ENCODE measurements at regions of chr3 and their contacts with region 1.

Region 1: GRCh38 chr3:106609666-106610301 is 741.0 kb upstream of the CBLB start:
- DNase-seq: peak; percentile 73
- ATAC-seq: peak; percentile 79
- H3K4me3 Mint-ChIP-seq: no peak overlapping the region
- H3K27ac Mint-ChIP-seq: peak overlapping the region; percentile 0
- H3K4me1 Mint-ChIP-seq: peaks cover 21% of the 10 kb centered on the region
- H3K27me3 Mint-ChIP-seq: peaks cover 2% of the 10 kb centered on the region
- CTCF ChIP-seq: peak; percentile 86

Region 2: GRCh38 chr3:105686278-105686897 is 923.4 kb before region 1 on chr3:
- CTCF ChIA-PET with region 1: interaction called, 3 read pairs
- POLR2A ChIA-PET with region 1: no interaction called
- intact Hi-C with region 1: loop called (anchors 10 kb)
- DNase-seq: no peak
- ATAC-seq: peak; percentile 66
- H3K4me3 Mint-ChIP-seq: no peak overlapping the region
- H3K27ac Mint-ChIP-seq: peak overlapping the region; percentile 67
- H3K4me1 Mint-ChIP-seq: peaks cover 26% of the 10 kb centered on the region
- H3K27me3 Mint-ChIP-seq: no peaks in the 10 kb centered on the region
- CTCF ChIP-seq: peak; percentile 89

Region 3: DNA sequence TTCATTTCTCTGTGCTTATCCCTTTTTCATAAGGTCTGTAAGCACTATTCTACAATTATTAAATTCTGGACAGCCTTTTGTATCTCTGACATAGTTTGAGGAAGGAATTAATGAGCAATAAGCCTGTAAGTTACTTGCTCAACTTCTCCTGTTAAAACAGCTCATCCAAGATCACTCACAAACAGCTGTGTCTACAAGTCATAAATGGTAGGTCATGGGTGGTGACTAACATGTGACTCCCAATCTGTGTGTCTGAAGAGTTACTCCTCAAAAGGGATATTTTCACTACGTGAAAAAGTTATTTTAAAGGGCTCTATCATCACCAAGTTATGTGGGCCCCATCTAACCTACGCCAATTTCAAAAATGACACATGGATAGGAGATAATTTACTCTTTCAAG is 595.8 kb before region 1 on chr3:
- CTCF ChIA-PET with region 1: no interaction called
- POLR2A ChIA-PET with region 1: no interaction called
- intact Hi-C with region 1: loop called (anchors 10 kb)
- DNase-seq: peak; percentile 25
- ATAC-seq: peak; percentile 40
- H3K4me3 Mint-ChIP-seq: no peak overlapping the region
- H3K27ac Mint-ChIP-seq: peak overlapping the region; percentile 47
- H3K4me1 Mint-ChIP-seq: peaks cover 46% of the 10 kb centered on the region
- H3K27me3 Mint-ChIP-seq: no peaks in the 10 kb centered on the region
- CTCF ChIP-seq: no peak

Region 4: GRCh38 chr3:106731230-106731629 is 121.4 kb after region 1 on chr3:
- CTCF ChIA-PET with region 1: no interaction called
- POLR2A ChIA-PET with region 1: no interaction called
- intact Hi-C with region 1: no loop called
- DNase-seq: no peak
- ATAC-seq: no peak
- H3K4me3 Mint-ChIP-seq: no peak overlapping the region
- H3K27ac Mint-ChIP-seq: no peak overlapping the region
- H3K4me1 Mint-ChIP-seq: no peaks in the 10 kb centered on the region
- H3K27me3 Mint-ChIP-seq: peaks cover 4% of the 10 kb centered on the region
- CTCF ChIP-seq: no peak

Region 5: GRCh38 chr3:106811376-106811775 is 201.6 kb after region 1 on chr3:
- CTCF ChIA-PET with region 1: no interaction called
- POLR2A ChIA-PET with region 1: no interaction called
- intact Hi-C with region 1: no loop called
- DNase-seq: no peak
- ATAC-seq: no peak
- H3K4me3 Mint-ChIP-seq: no peak overlapping the region
- H3K27ac Mint-ChIP-seq: no peak overlapping the region
- H3K4me1 Mint-ChIP-seq: no peaks in the 10 kb centered on the region
- H3K27me3 Mint-ChIP-seq: no peaks in the 10 kb centered on the region
- CTCF ChIP-seq: no peak